Right lobe of liver (tissue), 6 donors: ENCODE measurements at regions of chr5 and their contacts with region 1.

Region 1: GRCh38 chr5:126544087-126544740 is 50.8 kb downstream of the ALDH7A1 start:
- DNase-seq: no peak
- ATAC-seq: peak; percentile 39 to 70 (median 55)
- H3K4me3 ChIP-seq: no peak overlapping the region
- H3K27ac ChIP-seq: peak overlapping the region in 2 of 3 donors; percentile 9 to 81
- H3K4me1 ChIP-seq: peaks cover 0 to 23% (median 11%) of the 10 kb centered on the region in 4 donors
- H3K27me3 ChIP-seq: no peaks in the 10 kb centered on the region
- CTCF ChIP-seq: peak; percentile 26 to 51 (median 29)
- POLR2A ChIP-seq: no peak

Region 2: GRCh38 chr5:126414874-126415502 is 129.2 kb before region 1 on chr5:
- intact Hi-C with region 1: no loop called
- DNase-seq: no peak
- ATAC-seq: peak; percentile 75 to 78 (median 78)
- H3K4me3 ChIP-seq: no peak overlapping the region
- H3K27ac ChIP-seq: peak overlapping the region in 2 of 3 donors; percentile 5 to 12
- H3K4me1 ChIP-seq: peaks cover 0 to 11% (median 0%) of the 10 kb centered on the region in 4 donors
- H3K27me3 ChIP-seq: no peaks in the 10 kb centered on the region
- CTCF ChIP-seq: no peak
- POLR2A ChIP-seq: no peak

Region 3: DNA sequence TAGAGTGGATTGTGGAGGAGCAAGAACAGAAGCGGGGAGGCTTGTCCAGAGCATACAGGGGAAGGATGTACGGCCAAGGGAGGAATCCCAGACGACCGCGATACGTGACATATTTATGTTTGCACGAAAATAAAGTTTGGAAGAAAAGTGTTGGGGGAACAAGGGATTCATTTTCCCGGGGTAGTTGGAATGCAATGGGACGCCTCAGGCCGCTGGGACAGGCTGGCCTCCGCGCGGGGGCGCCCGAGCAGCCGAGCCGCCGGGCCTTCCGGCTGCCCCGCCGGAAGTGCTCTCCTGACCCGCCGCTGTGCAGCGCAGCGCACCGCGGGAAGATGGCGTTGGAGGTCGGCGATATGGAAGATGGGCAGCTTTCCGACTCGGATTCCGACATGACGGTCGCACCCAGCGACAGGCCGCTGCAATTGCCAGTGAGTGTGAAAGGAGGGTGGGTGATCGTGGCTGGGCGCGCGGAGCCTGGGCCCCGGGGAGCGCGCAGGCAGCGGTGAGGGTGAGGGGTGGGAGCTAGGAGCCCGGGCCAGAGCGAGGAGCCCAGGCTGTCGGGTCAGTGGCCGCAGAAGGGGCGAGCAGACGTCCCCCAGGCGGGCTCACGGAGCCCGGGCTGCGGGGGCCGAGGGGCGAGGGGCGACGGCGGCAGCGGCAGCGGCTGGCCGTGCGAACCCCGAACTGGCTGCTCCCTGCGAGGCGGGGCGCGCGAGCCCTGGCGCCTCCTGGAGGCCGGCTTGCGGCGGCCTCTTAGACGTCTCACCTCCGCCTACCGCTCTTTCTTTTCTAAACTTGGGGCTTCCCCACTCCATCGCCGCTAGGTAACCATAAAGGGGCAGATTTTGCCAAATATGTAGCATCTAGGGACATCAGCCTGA is 56.7 kb after region 1 on chr5 and contains the start of gene PHAX:
- intact Hi-C with region 1: loop called in 1 of 2 experiments (anchors 10 kb)
- DNase-seq: peak; percentile 85 to 86 (median 86)
- ATAC-seq: peak; percentile 98 to 100 (median 99)
- H3K4me3 ChIP-seq: peak within 1 kb of the TSS; percentile 96 to 100 (median 100)
- H3K27ac ChIP-seq: peak within 1 kb of the TSS; percentile 77 to 87 (median 85)
- H3K4me1 ChIP-seq: peaks cover 0 to 28% (median 8%) of the 10 kb centered on the region in 4 donors
- H3K27me3 ChIP-seq: no peaks in the 10 kb centered on the region
- CTCF ChIP-seq: peak; percentile 45 to 75 (median 69)
- POLR2A ChIP-seq: no peak
- total RNA-seq, gene PHAX: 11.0 to 24.6 (median 19.4) TPM

Region 4: DNA sequence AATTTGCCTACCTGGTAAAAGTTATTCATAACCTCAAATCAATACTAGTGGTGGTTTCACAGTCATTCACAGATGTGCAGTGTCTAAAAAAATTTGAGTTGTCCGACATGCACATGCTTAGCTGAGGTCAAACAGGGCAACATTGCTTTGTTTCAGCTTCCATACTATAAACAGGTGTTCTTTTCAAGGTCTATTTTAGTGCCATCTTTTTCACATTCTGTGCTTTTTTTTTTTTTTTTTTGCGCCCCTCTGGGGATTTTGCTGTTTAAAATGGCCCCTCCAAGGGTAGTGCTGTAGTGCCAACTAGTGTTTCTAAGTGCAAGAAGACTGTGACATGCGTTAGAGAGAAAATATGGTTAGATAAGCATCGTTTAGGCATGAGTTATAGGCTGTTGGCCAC is 71.1 kb after region 1 on chr5:
- intact Hi-C with region 1: no loop called
- DNase-seq: no peak
- ATAC-seq: no peak
- H3K4me3 ChIP-seq: no peak overlapping the region
- H3K27ac ChIP-seq: no peak overlapping the region
- H3K4me1 ChIP-seq: no peaks in the 10 kb centered on the region
- H3K27me3 ChIP-seq: no peaks in the 10 kb centered on the region
- CTCF ChIP-seq: no peak
- POLR2A ChIP-seq: no peak

Region 5: GRCh38 chr5:126693806-126694802 is 149.9 kb after region 1 on chr5:
- intact Hi-C with region 1: no loop called
- DNase-seq: no peak
- ATAC-seq: no peak
- H3K4me3 ChIP-seq: no peak overlapping the region
- H3K27ac ChIP-seq: no peak overlapping the region
- H3K4me1 ChIP-seq: no peaks in the 10 kb centered on the region
- H3K27me3 ChIP-seq: no peaks in the 10 kb centered on the region
- CTCF ChIP-seq: no peak
- POLR2A ChIP-seq: no peak